ENCODE measurements at regions of chr12 and their contacts with region 1.

Region 1: DNA sequence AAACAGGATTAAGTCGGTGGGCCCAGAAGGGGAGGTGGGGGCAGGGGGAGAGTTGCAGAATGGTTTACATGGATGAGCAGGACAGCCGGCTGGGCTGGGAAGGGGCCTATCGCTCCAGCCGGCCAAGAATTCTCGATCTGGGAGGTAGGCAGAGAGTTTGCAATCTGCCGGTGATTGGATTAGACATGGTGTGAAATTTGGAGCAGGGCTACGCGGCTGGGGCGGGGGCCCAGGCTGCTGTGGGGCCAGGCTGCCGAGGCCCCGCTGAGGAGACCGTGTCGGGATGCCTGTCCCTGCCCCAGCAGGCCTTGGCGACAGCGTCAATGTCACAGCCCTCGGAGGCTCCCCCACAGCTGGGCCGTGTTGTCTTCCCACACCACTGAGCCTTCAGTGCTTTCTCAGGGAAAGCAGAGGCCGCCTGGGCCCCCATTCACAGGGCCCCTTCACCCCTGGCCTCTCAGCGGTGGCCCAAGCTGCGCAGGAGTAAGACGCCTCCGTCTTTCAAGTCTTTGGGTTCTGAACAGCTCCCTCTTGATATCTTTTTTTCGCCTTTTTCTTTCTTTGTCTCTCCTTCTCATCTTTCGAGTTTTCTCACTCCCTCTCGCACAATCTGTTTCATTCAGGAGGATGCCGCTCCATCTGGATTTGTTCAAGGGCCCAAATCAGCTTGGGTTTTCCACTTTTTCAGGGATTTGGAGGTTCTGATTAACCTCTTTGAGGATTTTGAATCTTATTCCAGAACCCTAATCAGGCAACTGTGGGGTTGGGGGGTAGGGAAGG is 117.5 kb upstream of the PARP11 start:
- DNase-seq: no peak

Region 2: GRCh38 chr12:3885277-3886094 is 105.2 kb before region 1 on chr12:
- CTCF ChIA-PET with region 1: interaction called, 10 read pairs
- POLR2A ChIA-PET with region 1: interaction called, 3 read pairs
- DNase-seq: peak; percentile 19

Measured in HEK293T (cell line).